Posterior vena cava (tissue), 2 donors: ENCODE measurements at regions of chr11 and their contacts with region 1.

Region 1: DNA sequence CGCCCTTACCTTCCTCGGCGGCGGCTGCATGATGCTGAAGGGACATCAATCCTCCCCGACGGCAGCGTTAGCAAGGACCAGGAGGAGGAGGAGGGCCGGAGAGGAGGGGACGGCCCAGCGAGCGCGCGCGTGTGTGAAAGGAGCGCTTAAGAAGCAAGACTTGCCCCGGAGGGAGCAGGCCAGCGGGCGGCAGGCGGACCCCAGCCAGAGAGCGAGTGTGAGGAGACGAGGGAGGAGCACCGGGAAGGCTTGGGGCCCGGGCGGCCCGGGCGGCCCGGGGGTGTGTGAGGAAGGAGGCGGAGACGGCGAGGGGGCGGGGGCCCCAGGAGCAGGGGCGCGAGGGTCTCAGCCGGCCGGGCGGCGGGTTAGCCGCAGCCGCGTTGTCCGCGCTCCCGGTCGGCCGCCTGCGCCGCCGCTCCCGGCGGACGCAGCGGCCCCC is 251 bp downstream of the FCHSD2 start:
- DNase-seq: peak; percentile 93

Region 2: GRCh38 chr11:73818846-73819245 is 677.0 kb after region 1 on chr11:
- intact Hi-C with region 1: loop called in 1 of 2 experiments (anchors 10 kb)
- DNase-seq: no peak